GM12878 (cell line): ENCODE measurements at regions of chr1 and their contacts with region 1.

Region 1: GRCh38 chr1:62783723-62784508 is at the start of gene ATG4C:
- DNase-seq: peak; percentile 96
- ATAC-seq: peak; percentile 94
- H3K4me3 ChIP-seq: peak within 1 kb of the TSS; percentile 100
- H3K27ac ChIP-seq: peak within 1 kb of the TSS; percentile 94
- H3K4me1 ChIP-seq: no peaks in the 10 kb centered on the region
- H3K27me3 ChIP-seq: no peaks in the 10 kb centered on the region
- CTCF ChIP-seq: no peak
- EP300 ChIP-seq: 0 out of 4 replicates have a peak, but pooled peaks of 1 of the 2 experiments have one; percentile 29
- POLR2A ChIP-seq: peak; percentile 92
- RAD21 ChIP-seq: no peak
- polyA plus RNA-seq, gene ATG4C: 21.3 to 30.9 TPM

Region 2: GRCh38 chr1:62800825-62801306 is 16.9 kb after region 1 on chr1:
- CTCF ChIA-PET with region 1: interaction called, 3 read pairs
- POLR2A ChIA-PET with region 1: no interaction called
- RAD21 ChIA-PET with region 1: interaction called, 6 read pairs
- SMC1A ChIA-PET with region 1: interaction called, 7 read pairs
- in situ Hi-C with region 1: no loop called
- intact Hi-C with region 1: loop called (anchors 2 kb)
- DNase-seq: peak; percentile 78
- ATAC-seq: peak; percentile 99
- H3K4me3 ChIP-seq: no peak overlapping the region
- H3K27ac ChIP-seq: peak overlapping the region; percentile 49; the same call in 1 of the 2 replicates
- H3K4me1 ChIP-seq: peaks cover 6% of the 10 kb centered on the region
- H3K27me3 ChIP-seq: no peaks in the 10 kb centered on the region
- CTCF ChIP-seq: no peak
- EP300 ChIP-seq: peak in 1 of 2 experiments; percentile 84; a peak in 2 of 4 replicates
- POLR2A ChIP-seq: no peak
- RAD21 ChIP-seq: no peak

Region 3: DNA sequence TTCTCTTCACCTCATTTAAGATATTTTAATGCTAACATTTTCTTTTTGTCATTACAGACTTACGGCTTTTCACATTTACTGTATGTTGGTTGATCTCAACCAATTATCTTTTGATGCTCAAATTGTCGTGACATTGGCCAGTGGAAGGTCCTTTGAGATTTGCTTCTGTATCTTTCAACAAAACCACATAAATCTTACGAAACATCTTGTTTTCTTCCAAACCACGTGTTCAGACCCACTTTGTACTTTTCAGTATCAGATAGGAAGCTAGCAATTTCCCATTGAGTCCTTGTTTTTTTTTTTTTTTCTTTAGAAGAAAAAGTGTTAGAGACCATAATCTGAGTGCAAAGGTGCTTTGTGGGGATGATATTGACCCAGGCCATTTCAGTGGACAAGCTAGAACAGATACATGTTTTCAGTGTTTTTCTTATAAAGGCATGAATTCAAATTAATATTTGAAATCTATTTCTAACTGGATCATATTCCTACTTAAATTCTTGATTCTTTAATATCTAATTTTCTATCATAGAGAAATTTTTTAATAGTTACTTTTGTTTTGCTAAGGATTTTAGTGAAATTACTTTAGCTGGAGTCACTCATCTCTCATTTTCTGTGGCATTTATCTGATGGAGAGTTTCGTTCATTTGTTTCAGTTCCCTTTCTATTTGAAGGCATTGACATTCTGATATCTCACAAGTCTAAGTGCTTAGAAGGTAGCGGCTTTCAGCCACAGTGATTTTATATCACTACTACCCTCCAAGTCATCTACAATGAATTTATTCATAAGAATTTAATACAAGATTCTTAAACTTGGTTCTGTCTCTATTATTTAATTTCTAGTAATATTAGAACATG is 26.7 kb after region 1 on chr1:
- CTCF ChIA-PET with region 1: interaction called, 3 read pairs
- POLR2A ChIA-PET with region 1: no interaction called
- RAD21 ChIA-PET with region 1: interaction called, 9 read pairs
- SMC1A ChIA-PET with region 1: interaction called, 3 read pairs
- in situ Hi-C with region 1: no loop called
- intact Hi-C with region 1: loop called (anchors 2 kb)
- DNase-seq: peak; percentile 59
- ATAC-seq: peak; percentile 97
- H3K4me3 ChIP-seq: no peak overlapping the region
- H3K27ac ChIP-seq: peak overlapping the region; percentile 66; the same call in 1 of the 2 replicates
- H3K4me1 ChIP-seq: peaks cover 10% of the 10 kb centered on the region
- H3K27me3 ChIP-seq: no peaks in the 10 kb centered on the region
- CTCF ChIP-seq: no peak
- EP300 ChIP-seq: peak; percentile 18 to 94; a peak in 3 of 4 replicates
- POLR2A ChIP-seq: no peak
- RAD21 ChIP-seq: no peak